Activated naive CD4-positive, alpha-beta T cell treated with anti-CD3 and anti-CD28 coated beads for 36 hours (primary cell): ENCODE measurements at regions of chr6 and their contacts with region 1.

Region 1: DNA sequence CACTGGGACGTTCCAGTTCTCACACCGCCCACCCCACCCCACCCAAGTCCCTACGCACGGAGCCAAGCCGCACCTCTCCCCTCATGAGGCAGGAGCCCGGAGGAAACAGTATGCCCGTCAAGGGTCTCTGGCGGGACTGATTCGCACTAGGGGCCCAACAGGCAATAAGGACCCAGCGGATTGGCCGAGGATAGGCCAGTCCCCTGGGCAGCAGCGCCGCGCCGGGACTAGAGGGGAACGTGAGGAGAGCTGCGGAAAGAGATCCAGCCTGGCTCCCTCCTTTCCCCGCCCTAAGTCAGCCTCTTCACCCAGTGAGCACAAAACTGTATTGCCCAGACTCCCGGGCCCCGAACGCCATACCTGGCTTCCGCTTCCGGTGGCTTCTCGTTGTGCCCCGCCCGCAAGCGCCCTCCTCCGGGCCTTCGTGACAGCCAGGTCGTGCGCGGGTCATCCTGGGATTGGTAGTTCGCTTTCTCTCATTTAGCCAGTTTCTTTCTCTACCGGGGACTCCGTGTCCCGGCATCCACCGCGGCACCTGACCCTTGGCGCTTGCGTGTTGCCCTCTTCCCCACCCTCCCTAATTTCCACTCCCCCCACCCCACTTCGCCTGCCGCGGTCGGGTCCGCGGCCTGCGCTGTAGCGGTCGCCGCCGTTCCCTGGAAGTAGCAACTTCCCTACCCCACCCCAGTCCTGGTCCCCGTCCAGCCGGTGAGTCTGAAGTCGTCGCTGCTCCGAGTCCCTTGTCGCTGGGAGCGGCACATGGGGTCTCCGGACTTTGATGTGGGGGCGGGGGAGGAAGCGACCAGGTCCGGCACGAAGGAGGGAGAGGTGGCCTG is at the start of gene CSNK2B:
- DNase-seq: peak; percentile 99
- H3K4me3 Mint-ChIP-seq: peak within 1 kb of the TSS; percentile 95
- H3K27ac Mint-ChIP-seq: peak within 1 kb of the TSS; percentile 97
- H3K4me1 Mint-ChIP-seq: peaks cover 62% of the 10 kb centered on the region
- H3K27me3 Mint-ChIP-seq: no peaks in the 10 kb centered on the region
- total RNA-seq, gene CSNK2B: 215 to 219 TPM

Region 2: DNA sequence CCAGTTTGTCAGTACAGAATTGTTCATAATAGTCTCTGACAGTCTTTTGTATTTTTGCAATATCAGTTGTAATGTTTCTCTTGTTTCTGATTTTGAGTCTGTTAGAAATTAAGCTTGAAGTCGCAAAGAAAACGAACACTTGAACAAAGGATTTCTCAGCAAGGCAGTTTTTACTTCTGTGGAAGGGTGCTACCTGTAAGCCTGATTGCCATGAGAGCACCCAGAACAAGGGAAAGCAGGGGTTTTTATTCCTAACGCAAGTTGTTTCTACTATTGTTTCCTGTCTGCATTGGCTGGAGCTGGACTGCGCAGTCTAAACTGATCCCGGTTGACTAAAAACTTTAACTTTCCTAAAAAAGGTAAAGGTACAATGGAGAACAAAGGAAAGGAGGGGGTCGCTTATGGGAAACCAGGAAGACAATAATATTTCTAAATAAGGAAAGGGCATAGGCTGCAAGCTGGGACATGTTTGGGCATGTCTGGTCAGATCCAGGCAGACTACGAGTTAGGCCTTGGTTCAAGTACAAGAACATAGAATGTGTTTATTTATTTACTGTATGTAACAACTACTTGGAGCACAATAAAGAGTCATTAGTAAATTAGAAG is 337.3 kb before region 1 on chr6:
- CTCF ChIA-PET with region 1: no interaction called
- intact Hi-C with region 1: no loop called
- DNase-seq: no peak
- H3K4me3 Mint-ChIP-seq: no peak overlapping the region
- H3K27ac Mint-ChIP-seq: peak overlapping the region; percentile 87
- H3K4me1 Mint-ChIP-seq: peaks cover 14% of the 10 kb centered on the region
- H3K27me3 Mint-ChIP-seq: peaks cover 2% of the 10 kb centered on the region

Region 3: GRCh38 chr6:31619805-31620585 is 45.7 kb before region 1 on chr6:
- CTCF ChIA-PET with region 1: no interaction called
- intact Hi-C with region 1: loop called (anchors 1 kb)
- DNase-seq: peak; percentile 99
- H3K4me3 Mint-ChIP-seq: peak overlapping the region; percentile 83
- H3K27ac Mint-ChIP-seq: peak overlapping the region; percentile 97
- H3K4me1 Mint-ChIP-seq: peaks cover 55% of the 10 kb centered on the region
- H3K27me3 Mint-ChIP-seq: no peaks in the 10 kb centered on the region

Region 4: GRCh38 chr6:31702819-31703522 is 37.3 kb after region 1 on chr6 and contains the start of gene ABHD16A:
- CTCF ChIA-PET with region 1: no interaction called
- intact Hi-C with region 1: loop called (anchors 1 kb)
- DNase-seq: peak; percentile 99
- H3K4me3 Mint-ChIP-seq: peak within 1 kb of the TSS; percentile 99
- H3K27ac Mint-ChIP-seq: peak within 1 kb of the TSS; percentile 97
- H3K4me1 Mint-ChIP-seq: peaks cover 22% of the 10 kb centered on the region
- H3K27me3 Mint-ChIP-seq: no peaks in the 10 kb centered on the region
- total RNA-seq, gene ABHD16A: 19.9 to 22.5 TPM

Region 5: GRCh38 chr6:31723245-31723979 is 57.7 kb after region 1 on chr6 and contains the start of gene MPIG6B:
- CTCF ChIA-PET with region 1: no interaction called
- intact Hi-C with region 1: no loop called
- DNase-seq: no peak
- H3K4me3 Mint-ChIP-seq: no peak within 1 kb of the TSS
- H3K27ac Mint-ChIP-seq: no peak within 1 kb of the TSS
- H3K4me1 Mint-ChIP-seq: peaks cover 25% of the 10 kb centered on the region
- H3K27me3 Mint-ChIP-seq: no peaks in the 10 kb centered on the region
- total RNA-seq, gene MPIG6B: 0.49 TPM in 1 of 2 experiments, not detected in the other

Region 6: DNA sequence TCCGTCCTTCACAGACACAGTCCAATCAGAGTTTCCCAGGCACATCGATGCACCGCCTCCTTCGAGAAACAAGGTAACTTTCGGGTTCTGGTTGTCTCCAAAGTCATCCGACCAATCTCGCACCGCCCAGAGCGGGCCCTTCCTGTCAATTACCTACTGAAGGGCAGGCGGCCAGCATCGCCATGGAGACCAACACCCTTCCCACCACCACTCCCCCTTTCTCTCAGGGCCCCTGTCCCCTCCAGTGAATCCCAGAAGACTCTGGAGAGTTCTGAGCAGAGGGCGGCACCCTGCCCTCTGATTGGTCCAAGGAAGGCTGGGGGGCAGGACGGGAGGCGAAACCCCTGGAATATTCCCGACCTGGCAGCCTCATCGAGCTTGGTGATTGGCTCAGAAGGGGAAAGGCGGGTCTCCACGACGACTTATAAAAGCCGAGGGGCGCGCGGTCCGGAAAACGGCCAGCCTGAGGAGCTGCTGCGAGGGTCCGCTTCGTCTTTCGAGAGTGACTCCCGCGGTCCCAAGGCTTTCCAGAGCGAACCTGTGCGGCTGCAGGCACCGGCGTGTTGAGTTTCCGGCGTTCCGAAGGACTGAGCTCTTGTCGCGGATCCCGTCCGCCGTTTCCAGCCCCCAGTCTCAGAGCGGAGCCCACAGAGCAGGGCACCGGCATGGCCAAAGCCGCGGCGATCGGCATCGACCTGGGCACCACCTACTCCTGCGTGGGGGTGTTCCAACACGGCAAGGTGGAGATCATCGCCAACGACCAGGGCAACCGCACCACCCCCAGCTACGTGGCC is 161.8 kb after region 1 on chr6 and contains the start of gene HSPA1B:
- CTCF ChIA-PET with region 1: no interaction called
- intact Hi-C with region 1: loop called (anchors 2 kb)
- DNase-seq: peak; percentile 98
- H3K4me3 Mint-ChIP-seq: peak within 1 kb of the TSS; percentile 85
- H3K27ac Mint-ChIP-seq: peak within 1 kb of the TSS; percentile 97
- H3K4me1 Mint-ChIP-seq: peaks cover 46% of the 10 kb centered on the region
- H3K27me3 Mint-ChIP-seq: no peaks in the 10 kb centered on the region
- total RNA-seq, gene HSPA1B: 47.8 to 50.1 TPM

Region 7: DNA sequence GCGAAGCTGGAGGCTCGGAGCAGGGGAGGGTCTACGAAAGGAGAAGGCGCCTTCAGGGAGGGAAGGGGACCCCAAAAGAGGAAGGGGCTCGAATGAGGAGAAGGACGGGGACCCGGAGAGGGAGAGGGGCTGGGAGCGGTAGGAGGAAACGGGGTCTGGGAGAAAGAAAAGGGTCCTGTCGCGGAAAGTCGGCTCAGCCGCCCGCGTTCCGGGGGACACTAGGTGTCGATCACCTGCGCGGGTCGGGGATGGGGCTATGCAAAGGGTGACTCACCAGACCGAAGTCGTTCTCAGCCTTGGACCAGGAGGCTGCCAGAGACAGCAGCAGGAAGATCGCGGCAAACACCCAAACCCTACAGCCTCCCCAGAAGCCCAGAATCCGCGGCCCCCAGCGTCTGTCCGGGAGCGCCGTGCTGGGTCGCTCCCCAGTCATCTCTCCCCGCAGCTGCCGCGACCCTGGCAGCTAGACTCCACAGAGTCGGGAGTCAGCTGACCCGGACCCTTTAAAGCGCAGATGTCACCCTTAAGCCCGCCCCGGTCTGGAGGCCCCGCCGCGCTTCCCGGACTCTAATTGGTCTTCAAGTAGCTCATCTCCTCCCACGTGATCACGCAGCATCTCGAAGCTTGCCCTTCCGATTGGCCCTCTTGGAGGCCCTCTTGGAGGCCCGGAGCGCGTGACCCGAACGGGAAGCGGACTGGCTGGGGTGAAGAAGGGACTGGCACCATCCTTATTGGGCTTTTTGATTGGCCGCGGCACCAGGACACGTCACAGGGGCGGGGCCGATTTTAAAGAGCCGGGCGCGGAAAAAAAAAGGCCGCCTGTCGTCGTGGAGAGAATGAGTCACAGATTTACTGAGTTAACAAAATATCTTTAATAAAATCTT is 196.9 kb after region 1 on chr6 and contains the start of gene NEU1:
- CTCF ChIA-PET with region 1: interaction called, 3 read pairs
- intact Hi-C with region 1: loop called (anchors 1 kb)
- DNase-seq: peak; percentile 100
- H3K4me3 Mint-ChIP-seq: peak within 1 kb of the TSS; percentile 90
- H3K27ac Mint-ChIP-seq: peak within 1 kb of the TSS; percentile 73
- H3K4me1 Mint-ChIP-seq: peaks cover 11% of the 10 kb centered on the region
- H3K27me3 Mint-ChIP-seq: no peaks in the 10 kb centered on the region
- total RNA-seq, gene NEU1: 8.4 to 9.2 TPM

Region 8: DNA sequence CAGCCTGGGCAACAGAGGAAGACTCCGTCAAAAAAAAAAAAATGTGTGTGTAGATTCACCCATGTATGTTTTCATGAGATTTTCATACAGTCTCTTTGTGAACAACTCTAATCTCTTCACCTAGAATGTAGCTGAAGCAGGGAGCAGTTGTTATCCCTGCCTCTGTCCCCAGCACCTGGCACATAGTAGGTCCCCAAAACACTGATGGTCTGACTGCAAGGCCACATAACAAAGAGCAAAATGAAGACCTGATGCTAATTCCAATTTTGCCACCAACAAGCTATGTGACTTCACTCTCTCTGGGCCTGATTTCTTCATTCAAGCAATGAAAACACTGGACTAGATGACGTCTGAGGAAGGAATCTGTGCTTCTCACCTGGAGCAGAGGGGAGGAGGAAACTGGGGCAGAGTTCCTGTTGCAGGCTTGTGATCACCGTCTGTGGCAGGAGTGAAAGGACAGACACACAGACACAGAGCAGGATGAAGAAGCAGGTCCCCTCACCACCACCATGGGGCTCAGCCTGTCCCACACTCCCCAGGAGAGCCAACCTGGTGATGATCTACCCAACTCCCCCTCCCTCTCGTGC is 208.5 kb after region 1 on chr6:
- CTCF ChIA-PET with region 1: no interaction called
- intact Hi-C with region 1: no loop called
- DNase-seq: no peak
- H3K4me3 Mint-ChIP-seq: no peak overlapping the region
- H3K27ac Mint-ChIP-seq: no peak overlapping the region
- H3K4me1 Mint-ChIP-seq: no peaks in the 10 kb centered on the region
- H3K27me3 Mint-ChIP-seq: no peaks in the 10 kb centered on the region

Region 9: GRCh38 chr6:31958741-31959739 is 293.3 kb after region 1 on chr6 and contains the starts of genes NELFE and SKIC2:
- CTCF ChIA-PET with region 1: no interaction called
- intact Hi-C with region 1: loop called (anchors 1 kb)
- DNase-seq: peak; percentile 99
- H3K4me3 Mint-ChIP-seq: peak within 1 kb of the TSS; percentile 95
- H3K27ac Mint-ChIP-seq: peak within 1 kb of the TSS; percentile 94
- H3K4me1 Mint-ChIP-seq: peaks cover 41% of the 10 kb centered on the region
- H3K27me3 Mint-ChIP-seq: no peaks in the 10 kb centered on the region
- total RNA-seq, gene NELFE: 83.2 to 87.4 TPM
- total RNA-seq, gene SKIC2: 93.6 to 101 TPM

Region 10: GRCh38 chr6:32843979-32844838 is 1178.5 kb after region 1 on chr6 and contains the start of gene PSMB8:
- CTCF ChIA-PET with region 1: no interaction called
- intact Hi-C with region 1: loop called (anchors 10 kb)
- DNase-seq: peak; percentile 100
- H3K4me3 Mint-ChIP-seq: peak within 1 kb of the TSS; percentile 98
- H3K27ac Mint-ChIP-seq: peak within 1 kb of the TSS; percentile 99
- H3K4me1 Mint-ChIP-seq: peaks cover 71% of the 10 kb centered on the region
- H3K27me3 Mint-ChIP-seq: no peaks in the 10 kb centered on the region
- total RNA-seq, gene PSMB8: 286 to 308 TPM